Sciatic nerve (tissue), 2 donors: ENCODE measurements at regions of chr5 and their contacts with region 1.

Region 1: GRCh38 chr5:58738336-58738735 is 155.5 kb downstream of the RAB3C start:
- DNase-seq: no peak
- ATAC-seq: no peak

Region 2: GRCh38 chr5:58648846-58649245 is 89.5 kb before region 1 on chr5:
- intact Hi-C with region 1: no loop called
- DNase-seq: no peak
- ATAC-seq: no peak

Region 3: GRCh38 chr5:58666598-58667581 is 71.4 kb before region 1 on chr5:
- intact Hi-C with region 1: loop called (anchors 2 kb)
- DNase-seq: no peak
- ATAC-seq: no peak